A549 (cell line): ENCODE measurements at regions of chr3 and their contacts with region 1.

Region 1: DNA sequence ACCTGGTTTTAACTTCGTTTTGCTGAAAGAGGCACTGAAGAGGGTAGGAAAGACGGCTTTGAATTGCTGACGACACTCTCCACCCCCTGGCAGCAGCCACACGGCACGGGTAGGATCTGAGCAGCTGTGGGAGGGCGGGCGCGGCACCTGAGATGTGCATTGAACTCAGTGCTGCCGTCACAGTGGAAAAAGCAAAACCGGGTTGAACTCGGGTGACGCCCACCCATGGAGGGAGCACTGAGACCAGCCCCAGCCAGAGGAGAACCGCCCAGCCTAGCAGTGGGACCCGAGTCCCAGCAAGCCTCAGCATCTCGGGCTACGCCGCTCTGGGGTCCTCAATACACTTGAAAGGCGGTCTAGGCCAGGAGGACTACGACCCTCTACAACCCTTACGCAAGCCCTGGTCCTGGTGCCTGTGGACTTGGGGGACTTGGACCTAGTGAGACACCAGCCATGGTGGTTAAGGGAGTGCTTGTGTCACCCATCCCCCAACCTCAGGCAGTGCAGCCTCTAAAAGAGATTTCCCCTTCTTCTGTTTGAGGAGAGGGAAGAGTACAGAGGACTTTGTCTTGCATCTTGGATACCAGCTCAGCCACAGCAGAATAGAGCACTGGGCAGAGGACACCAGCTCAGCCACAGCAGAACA is 50.0 kb upstream of the RPL35A start:
- DNase-seq: no peak
- ATAC-seq: no peak
- H3K4me3 ChIP-seq: no peak overlapping the region
- H3K27ac ChIP-seq: no peak overlapping the region
- H3K4me1 ChIP-seq: no peaks in the 10 kb centered on the region
- CTCF ChIP-seq: no peak
- EP300 ChIP-seq: no peak
- POLR2A ChIP-seq: no peak
- RAD21 ChIP-seq: no peak

Region 2: GRCh38 chr3:197082871-197083270 is 817.1 kb before region 1 on chr3:
- CTCF ChIA-PET with region 1: no interaction called
- POLR2A ChIA-PET with region 1: no interaction called
- DNase-seq: no peak
- ATAC-seq: no peak
- H3K4me3 ChIP-seq: no peak overlapping the region
- H3K27ac ChIP-seq: no peak overlapping the region
- H3K4me1 ChIP-seq: peaks cover 9% of the 10 kb centered on the region
- CTCF ChIP-seq: no peak
- EP300 ChIP-seq: no peak
- POLR2A ChIP-seq: no peak
- RAD21 ChIP-seq: no peak

Region 3: DNA sequence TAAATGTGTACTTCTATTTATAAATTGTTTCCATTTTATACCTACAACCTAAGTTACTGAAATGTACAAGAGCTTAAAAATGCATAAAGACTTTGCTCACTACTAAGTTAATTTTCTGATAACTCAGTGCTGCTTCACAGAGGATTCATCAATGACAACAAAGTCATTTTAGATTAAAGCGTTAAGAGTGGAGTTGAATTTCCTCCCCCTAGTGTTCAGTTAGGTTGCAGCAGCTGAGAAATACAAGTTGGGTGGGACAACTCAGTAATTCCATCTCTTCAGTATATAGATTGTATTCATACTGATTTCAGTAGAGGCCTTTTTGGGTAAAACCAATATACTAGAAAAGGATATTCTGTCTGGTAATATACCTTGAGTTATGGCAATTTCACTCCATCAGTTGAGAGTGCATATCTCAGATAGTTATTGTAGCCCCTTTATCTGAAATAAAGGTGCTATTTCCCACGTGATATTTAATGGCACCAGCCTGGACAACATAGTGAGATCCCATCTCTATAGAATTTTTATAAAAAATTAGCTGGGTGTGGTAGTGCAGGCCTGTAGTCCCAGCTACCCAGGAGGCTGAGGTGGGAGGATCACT is 43.1 kb after region 1 on chr3:
- CTCF ChIA-PET with region 1: interaction called, 10 read pairs
- POLR2A ChIA-PET with region 1: no interaction called
- DNase-seq: peak in 1 of 2 experiments; percentile 47
- ATAC-seq: peak; percentile 62 to 82; a peak in 4 of 6 replicates
- H3K4me3 ChIP-seq: no peak overlapping the region
- H3K27ac ChIP-seq: no peak overlapping the region
- H3K4me1 ChIP-seq: no peaks in the 10 kb centered on the region
- CTCF ChIP-seq: peak; percentile 60
- EP300 ChIP-seq: no peak
- POLR2A ChIP-seq: no peak
- RAD21 ChIP-seq: peak; percentile 33 to 34; a peak in 3 of 5 replicates